Dendritic cell treated with granulocyte-macrophage colony-stimulating factor and Interleukin-4, amounts not matched to agents 40 ng/mL and 50 ng/mL, for 4 days (primary cell): ENCODE measurements at regions of chr2 and their contacts with region 1.

Region 1: DNA sequence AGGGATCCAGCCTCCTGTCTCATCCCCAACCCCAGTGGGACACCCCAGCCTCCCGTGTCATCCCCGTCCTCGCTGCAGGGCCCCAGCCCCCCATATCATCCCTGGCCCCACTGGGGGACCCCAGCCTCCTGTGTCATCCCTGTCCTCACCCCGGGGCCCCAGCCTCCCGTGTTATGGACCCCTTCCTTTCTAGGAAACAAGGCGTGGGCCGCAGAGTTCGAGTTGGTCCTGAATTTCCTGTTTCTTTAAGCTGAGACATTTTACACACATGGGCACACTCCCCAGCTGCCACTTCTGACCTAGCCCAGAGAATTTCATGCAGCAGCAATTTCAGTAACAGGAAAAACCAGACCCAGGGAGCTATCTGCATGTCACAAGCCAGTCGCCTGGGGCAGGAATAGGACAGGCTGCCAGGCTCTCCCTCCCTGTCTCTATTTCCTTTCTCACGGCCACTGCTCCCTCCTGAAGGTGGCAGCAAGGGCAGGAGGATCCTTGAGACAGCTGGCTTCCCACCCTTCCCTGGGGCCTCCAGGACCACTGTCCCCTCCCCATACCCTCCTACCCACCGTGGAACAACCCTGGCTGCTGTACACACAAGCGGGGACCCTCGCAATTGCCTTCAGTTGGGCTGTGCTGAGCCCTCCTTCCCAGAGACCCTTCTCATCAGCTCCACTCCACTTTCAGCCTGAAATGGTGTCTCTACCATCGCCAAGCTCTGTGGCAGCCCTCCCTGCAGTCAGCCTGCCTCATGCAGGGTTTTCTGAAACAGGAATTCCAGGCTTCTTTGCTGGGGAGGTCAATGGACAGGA is 141.9 kb upstream of the ID2 start:
- H3K4me3 Mint-ChIP-seq: peak overlapping the region; percentile 34
- H3K27ac Mint-ChIP-seq: peak overlapping the region; percentile 95
- H3K4me1 Mint-ChIP-seq: peaks cover 100% of the 10 kb centered on the region
- H3K27me3 Mint-ChIP-seq: no peaks in the 10 kb centered on the region

Region 2: DNA sequence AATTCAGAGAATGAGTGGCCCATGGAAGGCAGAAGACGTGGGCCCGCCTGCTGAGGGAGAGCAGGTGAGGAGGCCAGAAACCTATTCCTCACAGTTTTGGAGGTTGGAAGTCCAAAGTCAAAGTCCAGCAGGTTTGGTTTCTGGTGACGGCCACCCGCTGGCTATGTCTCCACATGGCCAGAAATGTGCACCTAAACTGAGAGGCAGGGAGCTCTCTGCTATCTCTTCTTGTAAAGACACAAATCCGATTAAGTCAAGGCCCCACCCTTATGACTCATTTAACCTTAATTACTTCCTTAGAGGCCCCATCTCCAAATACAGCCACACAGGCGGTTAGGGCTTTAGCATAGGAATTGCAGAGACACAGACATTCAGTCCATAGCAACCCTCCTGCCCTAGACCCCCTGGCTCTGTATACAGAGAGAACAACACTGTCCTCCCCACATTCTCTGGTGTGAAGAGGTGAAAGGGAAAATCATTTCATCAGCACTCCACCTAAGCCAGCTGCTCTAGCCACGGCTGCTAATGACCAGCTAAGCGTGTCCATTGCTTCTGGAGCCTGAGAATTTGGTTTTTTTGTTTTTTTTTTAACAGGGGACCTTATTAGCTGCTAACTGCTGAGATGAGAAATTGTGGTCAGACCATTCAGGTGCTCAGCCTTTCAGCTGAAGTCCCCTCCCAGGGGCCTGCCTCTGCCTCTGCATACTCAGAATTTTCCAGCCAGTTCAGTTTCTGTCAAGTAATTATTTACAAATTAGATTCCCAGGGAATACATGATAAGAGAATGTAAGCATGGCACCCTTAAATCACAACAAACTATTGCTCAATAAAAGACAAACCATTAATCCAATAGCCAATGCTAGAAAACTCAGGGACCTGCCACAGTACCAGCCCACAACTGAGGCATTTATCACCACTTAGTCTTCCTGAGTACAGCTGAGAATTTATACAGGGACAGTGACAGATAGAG is 226.8 kb before region 1 on chr2:
- intact Hi-C with region 1: loop called (anchors 5 kb)
- H3K4me3 Mint-ChIP-seq: peak overlapping the region; percentile 56
- H3K27ac Mint-ChIP-seq: peak overlapping the region; percentile 90
- H3K4me1 Mint-ChIP-seq: peaks cover 91% of the 10 kb centered on the region
- H3K27me3 Mint-ChIP-seq: no peaks in the 10 kb centered on the region

Region 3: GRCh38 chr2:8403876-8404275 is 136.1 kb before region 1 on chr2:
- intact Hi-C with region 1: no loop called
- H3K4me3 Mint-ChIP-seq: no peak overlapping the region
- H3K27ac Mint-ChIP-seq: no peak overlapping the region
- H3K4me1 Mint-ChIP-seq: peaks cover 5% of the 10 kb centered on the region
- H3K27me3 Mint-ChIP-seq: peaks cover 8% of the 10 kb centered on the region

Region 4: DNA sequence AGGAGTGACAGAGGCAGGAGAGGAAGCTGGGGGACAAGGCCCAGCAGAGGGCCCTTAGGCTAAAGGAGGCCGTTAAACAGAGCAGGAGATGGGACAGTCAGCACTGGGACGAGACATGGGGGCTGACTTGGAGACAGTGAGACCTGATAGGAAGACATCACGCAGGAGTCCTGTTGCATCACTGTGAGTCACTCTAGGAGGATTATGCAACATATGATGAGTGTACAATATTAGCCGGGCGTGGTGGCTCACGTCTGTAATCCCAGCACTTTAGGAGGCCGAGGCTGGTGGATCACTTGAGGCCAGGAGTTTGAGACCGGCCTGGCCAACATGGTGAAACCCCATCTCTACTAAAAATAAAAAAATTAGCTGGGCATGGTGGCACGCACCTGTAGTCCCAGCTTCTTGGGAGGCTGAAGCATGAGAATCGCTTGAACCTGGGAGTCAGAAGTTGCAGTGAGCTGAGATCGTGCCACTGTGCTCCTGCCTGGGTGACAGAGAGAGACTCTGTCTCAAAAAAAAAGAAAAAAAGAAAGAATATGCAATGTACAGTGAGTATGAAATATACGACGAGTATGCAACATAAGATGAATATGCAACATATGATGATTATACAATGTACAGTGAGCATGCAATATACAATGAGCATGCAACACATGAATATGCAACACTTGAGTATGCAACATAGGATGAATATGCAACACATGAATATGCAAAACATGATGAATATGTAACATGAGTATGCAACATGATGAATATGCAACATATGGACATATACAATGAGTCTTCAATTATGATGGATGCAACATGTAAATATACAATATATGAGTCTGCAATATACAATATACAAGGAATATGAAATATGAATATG is 58.6 kb after region 1 on chr2:
- intact Hi-C with region 1: loop called (anchors 5 kb)
- H3K4me3 Mint-ChIP-seq: no peak overlapping the region
- H3K27ac Mint-ChIP-seq: peak overlapping the region; percentile 37
- H3K4me1 Mint-ChIP-seq: peaks cover 59% of the 10 kb centered on the region
- H3K27me3 Mint-ChIP-seq: peaks cover 4% of the 10 kb centered on the region

Region 5: DNA sequence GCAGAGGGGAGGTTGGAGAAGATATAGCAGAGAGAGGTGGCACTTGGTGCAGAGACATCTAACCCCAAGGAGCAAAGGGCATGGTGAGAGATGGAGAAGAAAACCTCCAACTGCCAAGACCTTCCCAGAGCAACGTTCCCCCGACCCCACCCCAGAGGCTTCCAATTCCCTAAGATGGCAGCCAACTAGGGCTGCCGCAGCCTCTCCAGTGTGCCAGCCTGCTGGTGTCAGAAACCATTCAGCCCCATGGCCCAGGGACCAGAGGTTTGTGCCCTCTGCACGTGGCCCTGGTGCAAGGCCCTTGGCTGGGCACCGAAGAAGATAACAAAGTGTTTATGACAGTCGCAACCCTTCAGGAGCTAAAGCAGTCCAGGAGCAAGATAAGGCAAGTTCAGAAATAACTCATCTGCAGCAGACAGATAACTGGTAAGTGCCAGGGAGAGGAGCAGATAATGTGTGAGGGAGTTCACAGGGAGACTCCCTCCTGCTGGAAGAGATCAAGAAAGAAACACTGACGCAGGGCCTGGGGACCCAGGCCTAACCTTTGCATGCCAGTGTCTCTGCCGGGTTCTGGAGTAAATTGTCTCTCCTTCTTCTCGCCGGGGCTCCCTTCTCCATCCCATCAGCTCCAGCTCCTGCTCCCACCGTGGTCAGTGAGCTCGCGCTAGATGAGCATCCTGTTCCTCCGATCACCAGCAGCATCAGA is 75.8 kb after region 1 on chr2:
- intact Hi-C with region 1: no loop called
- H3K4me3 Mint-ChIP-seq: no peak overlapping the region
- H3K27ac Mint-ChIP-seq: no peak overlapping the region
- H3K4me1 Mint-ChIP-seq: peaks cover 6% of the 10 kb centered on the region
- H3K27me3 Mint-ChIP-seq: peaks cover 25% of the 10 kb centered on the region

Region 6: GRCh38 chr2:9002637-9003365 is 462.9 kb after region 1 on chr2:
- intact Hi-C with region 1: no loop called
- H3K4me3 Mint-ChIP-seq: peak overlapping the region; percentile 83
- H3K27ac Mint-ChIP-seq: peak overlapping the region; percentile 81
- H3K4me1 Mint-ChIP-seq: peaks cover 38% of the 10 kb centered on the region
- H3K27me3 Mint-ChIP-seq: peaks cover 3% of the 10 kb centered on the region